MCF 10A (cell line): ENCODE measurements at regions of chr22 and their contacts with region 1.

Region 1: GRCh38 chr22:37752466-37753087 is 55.2 kb upstream of the GCAT start:
- DNase-seq: peak; percentile 100
- H3K4me3 Mint-ChIP-seq: peak overlapping the region; percentile 53
- H3K27ac Mint-ChIP-seq: peak overlapping the region; percentile 72
- H3K4me1 Mint-ChIP-seq: peaks cover 43% of the 10 kb centered on the region
- H3K27me3 Mint-ChIP-seq: no peaks in the 10 kb centered on the region
- CTCF ChIP-seq: no peak

Region 2: GRCh38 chr22:37608477-37609239 is 143.9 kb before region 1 on chr22 and contains the start of gene GGA1:
- CTCF ChIA-PET with region 1: interaction called, 4 read pairs
- POLR2A ChIA-PET with region 1: interaction called, 18 read pairs
- intact Hi-C with region 1: no loop called
- DNase-seq: peak; percentile 96
- H3K4me3 Mint-ChIP-seq: peak within 1 kb of the TSS; percentile 85
- H3K27ac Mint-ChIP-seq: peak within 1 kb of the TSS; percentile 98
- H3K4me1 Mint-ChIP-seq: peaks cover 12% of the 10 kb centered on the region
- H3K27me3 Mint-ChIP-seq: no peaks in the 10 kb centered on the region
- CTCF ChIP-seq: no peak
- total RNA-seq, gene GGA1: 52.7 and 59.1 TPM in 2 replicates

Region 3: GRCh38 chr22:37676736-37677492 is 75.7 kb before region 1 on chr22:
- CTCF ChIA-PET with region 1: interaction called, 4 read pairs
- POLR2A ChIA-PET with region 1: interaction called, 8 read pairs
- intact Hi-C with region 1: loop called (anchors 2 kb)
- DNase-seq: peak; percentile 94
- H3K4me3 Mint-ChIP-seq: peak overlapping the region; percentile 75
- H3K27ac Mint-ChIP-seq: peak overlapping the region; percentile 66
- H3K4me1 Mint-ChIP-seq: peaks cover 25% of the 10 kb centered on the region
- H3K27me3 Mint-ChIP-seq: no peaks in the 10 kb centered on the region
- CTCF ChIP-seq: no peak

Region 4: DNA sequence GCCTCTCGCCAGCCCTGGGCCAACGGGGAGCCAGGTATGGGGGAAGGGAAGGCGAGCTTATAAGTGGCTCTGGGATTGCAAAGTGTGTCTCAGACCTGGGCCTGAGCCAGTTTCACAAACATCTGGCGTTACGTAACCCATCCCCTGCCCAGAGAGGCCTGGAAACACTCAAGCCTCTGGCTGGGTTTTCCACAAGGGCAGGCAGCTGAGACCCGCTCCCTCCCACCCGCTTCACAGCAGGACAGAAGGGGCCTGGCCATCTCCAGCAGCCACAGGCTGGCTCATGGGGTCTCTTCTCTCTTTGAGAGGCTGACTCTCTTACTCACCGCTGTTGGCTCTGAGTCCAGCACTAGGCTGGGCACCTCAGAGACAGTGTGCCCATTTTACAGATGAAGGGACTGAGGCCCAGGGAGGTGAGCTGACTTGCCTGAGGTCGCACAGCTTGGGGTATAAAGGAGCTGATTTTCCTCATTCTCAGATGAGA is 11.2 kb before region 1 on chr22:
- CTCF ChIA-PET with region 1: no interaction called
- POLR2A ChIA-PET with region 1: interaction called, 11 read pairs
- intact Hi-C with region 1: no loop called
- DNase-seq: peak; percentile 96
- H3K4me3 Mint-ChIP-seq: no peak overlapping the region
- H3K27ac Mint-ChIP-seq: no peak overlapping the region
- H3K4me1 Mint-ChIP-seq: peaks cover 25% of the 10 kb centered on the region
- H3K27me3 Mint-ChIP-seq: no peaks in the 10 kb centered on the region
- CTCF ChIP-seq: no peak

Region 5: DNA sequence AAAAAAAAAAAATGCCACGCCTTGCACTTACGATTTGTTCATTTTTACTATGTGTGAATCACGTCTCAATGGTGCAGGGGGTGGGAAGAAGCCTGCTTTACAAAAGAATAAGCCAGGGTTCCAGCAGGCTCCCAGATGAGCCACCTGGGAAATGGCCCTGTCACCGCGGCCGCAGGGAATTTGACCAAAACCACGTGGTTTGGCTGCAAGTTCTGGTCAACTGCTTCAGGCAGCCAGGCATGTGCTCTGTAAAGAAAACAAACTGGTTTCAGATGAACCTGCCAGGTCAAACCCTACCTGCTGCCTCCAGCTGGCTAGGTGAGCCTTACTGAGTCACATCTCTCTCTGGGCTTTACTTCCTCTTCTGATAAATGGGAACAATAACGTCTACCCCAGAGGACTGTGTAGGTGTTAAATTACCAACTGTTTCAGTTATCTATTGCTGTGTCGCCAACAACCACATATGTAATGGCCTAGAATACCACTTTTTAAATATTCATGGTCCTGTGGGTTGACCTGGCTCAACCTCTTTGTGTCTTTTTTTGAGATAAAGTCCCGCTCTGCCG is 24.6 kb after region 1 on chr22:
- CTCF ChIA-PET with region 1: interaction called, 5 read pairs
- POLR2A ChIA-PET with region 1: interaction called, 55 read pairs
- intact Hi-C with region 1: loop called (anchors 2 kb)
- DNase-seq: peak; percentile 97
- H3K4me3 Mint-ChIP-seq: peak overlapping the region; percentile 51
- H3K27ac Mint-ChIP-seq: peak overlapping the region; percentile 76
- H3K4me1 Mint-ChIP-seq: peaks cover 20% of the 10 kb centered on the region
- H3K27me3 Mint-ChIP-seq: no peaks in the 10 kb centered on the region
- CTCF ChIP-seq: no peak

Region 6: DNA sequence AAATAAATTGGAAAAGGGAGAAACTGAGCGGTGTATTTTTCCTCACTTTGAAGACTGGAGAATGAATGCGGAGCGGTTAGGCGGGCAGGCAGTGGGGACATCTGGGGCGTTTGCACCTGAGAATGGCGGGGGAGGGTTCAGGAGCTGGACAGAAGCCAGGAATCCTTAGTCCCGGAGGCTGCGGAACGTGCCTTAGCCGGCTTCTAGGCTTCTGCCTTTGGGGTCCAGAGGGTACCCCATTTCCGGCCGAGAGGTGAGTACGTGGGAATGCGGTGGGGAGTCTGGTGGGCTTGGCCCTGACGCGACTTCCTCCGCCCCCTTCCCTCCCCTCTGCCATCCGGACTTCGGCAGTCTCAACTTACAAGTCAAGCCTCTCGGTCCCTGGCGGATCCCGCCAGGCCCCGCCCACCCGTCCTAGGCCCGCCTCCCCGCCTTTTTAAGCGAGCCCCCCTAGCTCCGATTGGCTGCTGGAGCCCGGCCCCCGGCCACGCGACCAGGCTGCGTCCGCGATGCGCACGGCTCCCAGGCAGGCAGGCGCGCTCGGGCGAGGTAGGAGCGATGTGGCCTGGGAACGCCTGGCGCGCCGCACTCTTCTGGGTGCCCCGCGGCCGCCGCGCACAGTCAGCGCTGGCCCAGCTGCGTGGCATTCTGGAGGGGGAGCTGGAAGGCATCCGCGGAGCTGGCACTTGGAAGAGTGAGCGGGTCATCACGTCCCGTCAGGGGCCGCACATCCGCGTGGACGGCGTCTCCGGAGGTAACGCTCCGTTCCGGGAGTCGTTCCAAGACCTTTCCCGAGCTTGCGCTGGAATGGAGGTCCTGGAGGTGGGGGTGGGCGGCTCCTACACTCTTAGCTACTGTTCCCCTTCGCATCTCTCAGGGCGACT is 55.1 kb after region 1 on chr22 and contains the start of gene GCAT:
- CTCF ChIA-PET with region 1: no interaction called
- POLR2A ChIA-PET with region 1: interaction called, 11 read pairs
- intact Hi-C with region 1: no loop called
- DNase-seq: peak; percentile 96
- H3K4me3 Mint-ChIP-seq: peak within 1 kb of the TSS; percentile 78
- H3K27ac Mint-ChIP-seq: peak within 1 kb of the TSS; percentile 59
- H3K4me1 Mint-ChIP-seq: peaks cover 13% of the 10 kb centered on the region
- H3K27me3 Mint-ChIP-seq: no peaks in the 10 kb centered on the region
- CTCF ChIP-seq: no peak
- total RNA-seq, gene GCAT: 21.5 and 32.8 TPM in 2 replicates